ENCODE measurements at regions of chr19 and their contacts with region 1.

Region 1: DNA sequence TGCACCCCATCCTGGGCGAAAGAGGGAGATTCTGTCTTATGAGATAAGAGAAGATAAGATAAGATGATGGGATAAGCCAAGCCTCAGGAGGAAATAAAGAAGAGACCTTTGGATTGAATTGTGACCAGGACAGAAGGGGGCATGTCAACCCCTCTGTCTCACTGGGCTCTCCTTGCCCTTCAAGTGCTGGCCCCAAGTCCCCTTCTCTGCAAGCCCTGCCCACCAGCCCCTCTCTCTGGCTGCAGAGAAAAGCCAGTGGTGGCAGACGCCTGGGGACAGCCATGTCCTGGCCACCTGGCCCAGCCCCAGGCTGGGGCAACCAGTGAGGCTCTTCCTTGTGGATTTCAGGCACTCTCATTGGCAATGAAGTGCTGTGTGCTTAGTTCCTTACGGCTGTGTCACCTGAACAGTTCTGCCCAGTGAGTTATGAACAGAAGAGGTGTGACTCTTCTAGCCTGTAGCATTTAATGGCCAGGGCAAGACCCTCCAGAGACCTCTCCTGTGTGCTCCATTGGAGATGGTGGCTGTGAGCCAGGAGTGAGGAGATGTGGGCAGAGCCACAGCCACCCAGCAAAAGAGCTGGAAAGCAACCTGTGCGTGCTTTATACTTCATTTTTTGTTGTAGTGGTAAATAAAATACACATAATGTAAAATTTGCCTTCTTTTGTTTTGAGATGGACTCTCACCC is 6.1 kb upstream of the BTBD2 start:
- H3K4me3 ChIP-seq: no peak overlapping the region
- H3K27ac ChIP-seq: no peak overlapping the region
- H3K4me1 ChIP-seq: no peaks in the 10 kb centered on the region
- CTCF ChIP-seq: no peak

Region 2: DNA sequence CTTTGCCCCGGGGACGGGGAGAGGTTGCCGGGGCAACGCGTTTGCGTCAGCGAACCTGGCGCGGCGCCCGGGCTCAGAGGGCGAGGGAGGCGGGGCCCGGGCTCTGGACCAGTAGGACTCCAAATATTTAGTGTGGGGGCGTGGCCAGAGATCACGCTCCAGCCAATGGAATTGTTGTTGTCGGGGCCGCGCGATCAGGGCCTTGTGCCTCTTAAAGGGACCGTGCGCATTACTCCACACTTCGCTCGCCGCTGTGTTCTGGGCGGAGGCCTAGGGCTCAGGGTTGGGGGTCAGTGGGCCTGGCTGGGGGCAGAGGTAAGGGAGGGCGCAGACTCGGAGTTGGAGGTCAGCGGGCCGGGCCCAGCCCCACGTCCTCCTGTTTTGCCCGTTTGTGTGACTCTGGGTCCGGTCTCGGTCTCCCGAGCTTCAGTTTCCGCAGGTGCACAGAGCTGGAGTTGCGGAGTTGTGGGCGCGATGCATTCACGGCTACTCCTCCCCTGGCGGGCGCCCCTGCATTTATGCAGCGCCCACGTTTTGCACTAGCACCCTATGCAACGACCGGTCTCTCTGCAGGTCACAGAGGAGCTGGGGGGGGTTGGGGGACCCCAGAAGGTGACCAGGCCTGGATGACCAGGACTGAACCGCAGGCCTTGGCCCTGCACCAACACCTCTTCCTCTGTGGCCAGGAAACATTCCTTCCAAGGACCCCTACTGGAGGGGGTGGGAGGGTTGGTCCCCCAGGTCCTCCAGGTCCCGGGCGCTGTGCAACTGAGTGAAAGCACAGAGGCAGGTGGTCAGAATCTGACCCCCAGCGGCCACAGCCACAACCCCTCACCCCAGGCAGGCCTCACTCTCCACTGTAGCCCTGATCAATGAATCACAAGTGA is 40.1 kb after region 1 on chr19:
- CTCF ChIA-PET with region 1: interaction called, 14 read pairs
- POLR2A ChIA-PET with region 1: interaction called, 3 read pairs
- H3K4me3 ChIP-seq: peak overlapping the region; percentile 57
- H3K27ac ChIP-seq: peak overlapping the region; percentile 92
- H3K4me1 ChIP-seq: peaks cover 16% of the 10 kb centered on the region
- CTCF ChIP-seq: peak; percentile 64

Region 3: DNA sequence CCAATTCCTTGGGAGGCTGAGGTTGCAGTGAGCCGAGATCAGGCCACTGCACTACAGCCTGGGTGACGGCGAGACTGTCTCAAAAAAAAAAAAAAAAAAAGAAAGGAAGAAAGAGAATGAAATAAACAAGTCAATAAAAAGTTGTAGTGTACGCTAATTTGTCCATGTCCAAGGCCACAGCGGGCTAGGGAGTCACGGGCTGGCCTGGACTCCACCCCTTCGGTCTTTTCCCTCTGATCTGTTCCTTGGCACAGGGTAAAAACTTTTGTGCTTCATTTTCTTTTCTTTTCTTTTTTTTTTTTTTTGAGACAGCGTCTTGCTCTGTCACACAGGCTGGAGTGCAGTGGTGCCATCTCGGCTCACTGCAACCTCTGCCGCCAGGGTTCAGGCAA is 48.8 kb after region 1 on chr19:
- CTCF ChIA-PET with region 1: interaction called, 30 read pairs
- POLR2A ChIA-PET with region 1: interaction called, 3 read pairs
- H3K4me3 ChIP-seq: no peak overlapping the region
- H3K27ac ChIP-seq: no peak overlapping the region
- H3K4me1 ChIP-seq: no peaks in the 10 kb centered on the region
- CTCF ChIP-seq: no peak